ENCODE measurements at regions of chr15 and their contacts with region 1.

Region 1: GRCh38 chr15:33808720-33809457 is 159.4 kb upstream of the CHRM5 start:
- DNase-seq: no peak
- ATAC-seq: no peak
- H3K4me3 ChIP-seq: no peak overlapping the region
- H3K27ac ChIP-seq: no peak overlapping the region
- H3K4me1 ChIP-seq: no peaks in the 10 kb centered on the region
- H3K27me3 ChIP-seq: peaks cover 11% of the 10 kb centered on the region
- CTCF ChIP-seq: no peak
- POLR2A ChIP-seq: no peak
- RAD21 ChIP-seq: no peak

Region 2: GRCh38 chr15:33756961-33757360 is 51.9 kb before region 1 on chr15:
- CTCF ChIA-PET with region 1: no interaction called
- POLR2A ChIA-PET with region 1: no interaction called
- dilution Hi-C with region 1: no loop called
- in situ Hi-C with region 1: no loop called
- intact Hi-C with region 1: no loop called
- DNase-seq: no peak
- ATAC-seq: no peak
- H3K4me3 ChIP-seq: no peak overlapping the region
- H3K27ac ChIP-seq: no peak overlapping the region
- H3K4me1 ChIP-seq: no peaks in the 10 kb centered on the region
- H3K27me3 ChIP-seq: peaks cover 2% of the 10 kb centered on the region; the same call in 1 of the 2 replicates
- CTCF ChIP-seq: no peak
- POLR2A ChIP-seq: no peak
- RAD21 ChIP-seq: no peak

Region 3: DNA sequence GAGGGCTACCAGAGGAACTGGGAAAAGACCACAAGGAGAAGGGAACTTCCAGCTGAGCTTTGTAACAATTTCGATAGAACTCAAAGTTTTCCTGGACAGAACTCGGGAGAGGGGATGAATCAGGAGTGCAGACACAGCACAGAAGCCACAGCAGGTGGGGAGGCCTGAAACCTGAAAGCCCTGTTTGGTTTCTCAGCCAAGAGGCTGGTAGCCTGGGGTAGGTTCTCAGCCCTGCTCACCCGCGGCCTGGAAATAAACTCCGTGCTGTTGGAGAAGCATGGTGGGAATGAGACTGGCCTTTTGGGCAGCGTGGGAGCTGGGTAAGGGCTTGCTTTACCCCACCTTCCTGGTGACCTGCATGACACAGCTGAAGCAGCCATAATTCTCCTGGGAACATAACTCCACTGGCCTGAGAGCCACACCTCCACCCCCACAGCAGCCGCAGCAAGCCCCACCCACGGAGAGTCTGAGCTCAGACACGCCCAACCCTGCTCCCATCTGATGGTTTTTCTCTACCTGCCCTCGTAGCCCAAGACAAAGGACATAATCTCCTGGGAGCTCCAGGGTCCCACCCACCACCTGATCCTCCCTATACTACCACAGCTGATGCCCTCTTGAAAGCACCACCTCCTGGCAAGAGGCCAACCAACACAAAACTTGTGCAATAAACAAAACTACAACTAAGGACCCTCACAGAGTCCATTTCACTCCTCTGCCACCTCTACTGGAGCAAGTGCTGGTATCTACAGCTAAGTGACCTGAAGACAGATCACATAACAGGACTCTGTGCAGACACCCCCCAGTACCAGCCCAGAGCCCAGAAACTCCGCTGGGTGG is 106.9 kb after region 1 on chr15:
- CTCF ChIA-PET with region 1: no interaction called
- POLR2A ChIA-PET with region 1: interaction called, 18 read pairs
- dilution Hi-C with region 1: no loop called
- in situ Hi-C with region 1: no loop called
- intact Hi-C with region 1: no loop called
- DNase-seq: no peak
- ATAC-seq: no peak
- H3K4me3 ChIP-seq: no peak overlapping the region
- H3K27ac ChIP-seq: no peak overlapping the region
- H3K4me1 ChIP-seq: peaks cover 3% of the 10 kb centered on the region; the same call in 1 of the 2 replicates
- H3K27me3 ChIP-seq: no peaks in the 10 kb centered on the region
- CTCF ChIP-seq: no peak
- POLR2A ChIP-seq: no peak
- RAD21 ChIP-seq: no peak

Measured in IMR-90 (cell line).